Activated naive CD4-positive, alpha-beta T cell treated with anti-CD3 and anti-CD28 coated beads for 36 hours (primary cell): ENCODE measurements at regions of chr15 and their contacts with region 1.

Region 1: GRCh38 chr15:52208306-52208946 is 17.2 kb upstream of the GNB5 start:
- DNase-seq: peak; percentile 91
- H3K4me3 Mint-ChIP-seq: no peak overlapping the region
- H3K27ac Mint-ChIP-seq: no peak overlapping the region
- H3K4me1 Mint-ChIP-seq: no peaks in the 10 kb centered on the region
- H3K27me3 Mint-ChIP-seq: no peaks in the 10 kb centered on the region

Region 2: GRCh38 chr15:52163321-52164190 is 44.9 kb before region 1 on chr15:
- CTCF ChIA-PET with region 1: interaction called, 25 read pairs
- intact Hi-C with region 1: no loop called
- DNase-seq: peak; percentile 29
- H3K4me3 Mint-ChIP-seq: no peak overlapping the region
- H3K27ac Mint-ChIP-seq: no peak overlapping the region
- H3K4me1 Mint-ChIP-seq: peaks cover 28% of the 10 kb centered on the region
- H3K27me3 Mint-ChIP-seq: no peaks in the 10 kb centered on the region

Region 3: DNA sequence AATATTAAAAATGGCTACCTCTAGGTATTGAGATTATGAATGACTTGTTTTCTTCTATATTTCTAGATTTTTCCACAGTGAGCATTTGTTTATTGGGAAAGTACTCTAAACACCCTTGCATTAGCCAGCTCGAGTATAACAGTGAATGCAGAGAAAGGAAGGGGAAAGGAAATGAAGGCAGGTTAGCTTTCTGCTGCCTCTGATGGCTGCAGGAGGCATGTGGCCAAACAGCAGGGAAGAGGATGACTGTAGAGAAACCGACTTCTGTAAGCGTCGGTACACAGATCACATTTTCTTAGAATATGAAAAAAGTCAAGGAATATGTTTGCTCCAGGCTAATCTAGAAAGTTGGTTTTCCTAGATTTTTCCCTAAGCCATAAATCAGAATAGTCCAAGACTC is 37.0 kb before region 1 on chr15:
- CTCF ChIA-PET with region 1: interaction called, 4 read pairs
- intact Hi-C with region 1: loop called (anchors 2 kb)
- DNase-seq: peak; percentile 45
- H3K4me3 Mint-ChIP-seq: peak overlapping the region; percentile 49
- H3K27ac Mint-ChIP-seq: no peak overlapping the region
- H3K4me1 Mint-ChIP-seq: peaks cover 30% of the 10 kb centered on the region
- H3K27me3 Mint-ChIP-seq: no peaks in the 10 kb centered on the region

Region 4: GRCh38 chr15:52405856-52406255 is 197.4 kb after region 1 on chr15:
- CTCF ChIA-PET with region 1: no interaction called
- intact Hi-C with region 1: no loop called
- DNase-seq: no peak
- H3K4me3 Mint-ChIP-seq: no peak overlapping the region
- H3K27ac Mint-ChIP-seq: no peak overlapping the region
- H3K4me1 Mint-ChIP-seq: no peaks in the 10 kb centered on the region
- H3K27me3 Mint-ChIP-seq: no peaks in the 10 kb centered on the region